ENCODE measurements at regions of chr3 and their contacts with region 1.

Region 1: DNA sequence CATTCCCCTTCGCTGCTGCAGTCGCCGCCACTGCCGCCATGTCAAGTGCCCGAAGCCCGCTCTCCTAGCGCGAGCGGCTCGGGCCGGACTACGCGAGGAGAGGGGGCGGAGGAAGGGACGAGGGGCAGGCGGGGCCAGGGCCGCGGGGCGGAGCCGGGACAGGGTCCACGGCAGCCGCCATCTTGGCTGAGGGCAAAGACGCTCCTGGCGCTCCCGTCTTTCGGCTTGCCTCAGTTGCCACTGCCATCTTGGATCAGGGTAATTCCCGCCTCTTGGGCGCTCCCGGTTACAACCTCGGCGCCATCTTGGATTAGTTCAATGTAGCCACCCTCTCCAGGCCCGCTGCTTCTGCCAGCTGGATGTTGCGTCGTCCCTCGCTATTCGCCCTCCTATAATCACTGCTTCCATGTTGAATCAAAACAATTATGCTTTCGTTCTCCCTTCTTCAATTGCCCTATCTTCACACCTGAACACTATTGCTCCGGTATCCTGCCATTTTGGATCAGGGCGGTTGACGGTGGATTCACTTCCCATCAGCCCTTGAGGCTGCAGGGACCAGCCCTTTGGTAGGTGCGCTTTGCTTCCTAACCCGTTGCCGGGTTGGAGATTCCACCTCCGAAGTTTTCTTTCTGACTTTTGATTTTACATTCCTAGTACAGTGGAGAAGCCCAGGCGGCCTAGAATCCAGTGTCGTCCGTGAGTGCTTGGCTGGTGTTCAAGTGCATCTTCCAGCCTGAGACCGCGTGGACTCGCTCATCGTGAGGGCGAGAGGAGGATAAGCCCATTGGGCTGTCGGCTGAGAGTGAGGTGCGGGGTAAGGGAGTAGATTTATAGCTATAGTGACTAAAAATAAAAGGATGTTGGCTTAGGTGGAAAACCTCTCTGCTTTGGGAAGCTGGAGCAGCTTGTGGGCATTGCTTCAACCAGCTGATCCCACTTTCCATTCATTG is at the start of gene HACD2:
- DNase-seq: peak; percentile 85 to 98 (median 92)
- ATAC-seq: peak; percentile 93
- H3K4me3 ChIP-seq: peak within 1 kb of the TSS; percentile 79
- H3K4me3 Mint-ChIP-seq: peak within 1 kb of the TSS; percentile 95
- H3K27ac ChIP-seq: peak within 1 kb of the TSS; percentile 84 to 92
- H3K27ac Mint-ChIP-seq: peak within 1 kb of the TSS; percentile 89
- H3K4me1 ChIP-seq: peaks cover 16% of the 10 kb centered on the region
- H3K4me1 Mint-ChIP-seq: peaks cover 25% of the 10 kb centered on the region
- H3K27me3 ChIP-seq: no peaks in the 10 kb centered on the region
- H3K27me3 Mint-ChIP-seq: no peaks in the 10 kb centered on the region
- CTCF ChIP-seq: no peak
- total RNA-seq, gene HACD2: 12.1 to 13.3 TPM

Region 2: DNA sequence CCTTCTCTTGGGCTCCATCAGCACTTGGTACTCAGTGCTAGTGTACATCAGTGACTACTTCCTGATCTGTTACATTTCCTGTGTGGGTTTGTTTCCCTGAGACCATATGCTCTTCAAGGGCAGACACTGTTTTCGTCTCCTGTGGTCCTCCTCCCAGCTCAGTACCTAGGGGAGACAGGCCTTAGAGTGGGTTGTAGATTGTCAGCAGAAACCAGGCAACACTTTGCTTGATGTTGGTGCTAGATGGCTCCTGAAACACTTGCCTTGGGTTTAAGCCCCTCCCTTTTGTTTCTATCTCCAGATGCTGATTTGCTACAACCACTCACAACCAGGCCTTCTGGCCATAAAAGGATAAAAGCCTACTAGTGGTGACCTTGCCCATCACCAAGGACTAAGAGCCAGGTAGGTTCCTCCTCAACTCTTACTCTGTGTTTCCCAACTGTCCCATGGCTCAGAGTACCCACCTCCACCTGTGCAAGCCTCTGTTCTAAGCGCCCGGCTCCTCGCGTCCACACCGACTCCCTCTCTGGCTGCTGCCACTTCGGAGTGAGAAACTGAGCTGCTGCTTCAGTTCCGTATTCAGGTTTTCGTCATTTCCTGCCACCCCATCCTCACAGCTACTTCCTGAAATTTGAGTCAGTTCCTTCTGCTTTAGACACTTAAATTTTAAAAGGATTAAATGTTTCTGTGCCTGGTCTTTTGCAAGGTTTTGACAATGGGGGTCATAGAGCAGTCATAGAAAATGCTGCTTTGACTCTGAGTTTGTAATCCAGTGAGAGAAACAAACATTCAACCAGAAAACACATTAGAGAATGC is 1924.7 kb before region 1 on chr3 and contains the start of gene HCLS1:
- CTCF ChIA-PET with region 1: no interaction called
- POLR2A ChIA-PET with region 1: no interaction called
- intact Hi-C with region 1: loop called (anchors 2 to 10 kb)
- DNase-seq: peak; percentile 46 to 89 (median 62)
- ATAC-seq: peak; percentile 83
- H3K4me3 ChIP-seq: peak within 1 kb of the TSS; percentile 61
- H3K4me3 Mint-ChIP-seq: peak within 1 kb of the TSS; percentile 94
- H3K27ac ChIP-seq: peak within 1 kb of the TSS; percentile 83 to 97
- H3K27ac Mint-ChIP-seq: peak within 1 kb of the TSS; percentile 96
- H3K4me1 ChIP-seq: peaks cover 48% of the 10 kb centered on the region
- H3K4me1 Mint-ChIP-seq: peaks cover 55% of the 10 kb centered on the region
- H3K27me3 ChIP-seq: no peaks in the 10 kb centered on the region
- H3K27me3 Mint-ChIP-seq: no peaks in the 10 kb centered on the region
- CTCF ChIP-seq: no peak
- total RNA-seq, gene HCLS1: 204 to 206 TPM

Region 3: GRCh38 chr3:122514123-122515019 is 1070.9 kb before region 1 on chr3 and contains the start of gene KPNA1:
- CTCF ChIA-PET with region 1: no interaction called
- POLR2A ChIA-PET with region 1: no interaction called
- intact Hi-C with region 1: loop called in 1 of 2 experiments (anchors 10 kb)
- DNase-seq: peak; percentile 70 to 95 (median 82)
- ATAC-seq: peak; percentile 85
- H3K4me3 ChIP-seq: peak within 1 kb of the TSS; percentile 68
- H3K4me3 Mint-ChIP-seq: peak within 1 kb of the TSS; percentile 89
- H3K27ac ChIP-seq: peak within 1 kb of the TSS; percentile 83 to 97
- H3K27ac Mint-ChIP-seq: peak within 1 kb of the TSS; percentile 82
- H3K4me1 ChIP-seq: peaks cover 17% of the 10 kb centered on the region
- H3K4me1 Mint-ChIP-seq: peaks cover 44% of the 10 kb centered on the region
- H3K27me3 ChIP-seq: no peaks in the 10 kb centered on the region
- H3K27me3 Mint-ChIP-seq: no peaks in the 10 kb centered on the region
- CTCF ChIP-seq: no peak
- total RNA-seq, gene KPNA1: 46.2 to 49.8 TPM

Region 4: DNA sequence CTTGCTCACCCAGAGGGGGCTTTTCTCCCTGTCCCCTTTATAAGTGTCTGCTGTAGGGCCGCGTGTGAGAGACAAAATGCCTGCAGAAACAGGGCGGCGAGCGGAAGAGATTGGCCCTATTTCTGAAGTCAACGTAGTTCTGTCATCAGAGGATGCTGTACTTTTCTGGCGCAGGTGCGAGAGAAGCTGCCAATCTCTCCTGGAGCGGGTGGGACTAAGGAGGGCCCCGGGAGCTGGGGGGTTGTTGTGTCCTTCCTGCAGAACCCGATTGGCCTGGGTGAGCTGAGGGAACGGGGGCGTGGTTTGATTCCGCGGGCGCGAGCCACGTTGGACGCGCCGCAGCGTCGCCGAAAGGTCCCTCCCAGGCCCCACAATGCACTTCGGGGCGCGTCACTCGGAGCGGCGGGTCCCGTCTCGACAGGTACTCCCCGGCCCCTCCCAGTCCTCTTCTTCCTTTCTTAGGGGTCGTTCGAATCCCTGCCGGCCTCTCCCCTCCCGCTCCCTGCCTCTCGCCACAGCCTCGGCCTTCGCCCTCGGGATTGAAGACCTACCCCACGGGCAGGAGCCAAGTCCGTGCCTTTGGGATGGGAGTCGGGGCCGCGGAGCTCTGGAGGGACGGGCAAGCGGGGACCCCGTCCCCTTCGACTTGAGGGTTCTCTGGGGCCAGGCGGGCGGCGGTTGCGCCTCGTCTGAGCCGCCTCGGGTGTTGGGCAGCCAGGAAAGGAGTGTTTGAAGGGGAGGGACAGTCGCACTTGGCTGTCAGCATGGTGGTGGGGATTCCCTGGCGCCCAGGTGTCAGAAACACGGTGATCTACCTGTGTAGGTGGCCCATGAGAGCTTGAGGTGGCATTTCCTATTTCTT is 383.5 kb before region 1 on chr3 and contains the start of gene SEC22A:
- CTCF ChIA-PET with region 1: no interaction called
- POLR2A ChIA-PET with region 1: interaction called, 12 read pairs
- intact Hi-C with region 1: loop called (anchors 1 to 2 kb)
- DNase-seq: peak; percentile 88 to 99 (median 94)
- ATAC-seq: peak; percentile 95
- H3K4me3 ChIP-seq: peak within 1 kb of the TSS; percentile 88
- H3K4me3 Mint-ChIP-seq: peak within 1 kb of the TSS; percentile 89
- H3K27ac ChIP-seq: peak within 1 kb of the TSS; percentile 96 to 98
- H3K27ac Mint-ChIP-seq: peak within 1 kb of the TSS; percentile 98
- H3K4me1 ChIP-seq: peaks cover 20% of the 10 kb centered on the region
- H3K4me1 Mint-ChIP-seq: peaks cover 44% of the 10 kb centered on the region
- H3K27me3 ChIP-seq: no peaks in the 10 kb centered on the region
- H3K27me3 Mint-ChIP-seq: no peaks in the 10 kb centered on the region
- CTCF ChIP-seq: no peak
- total RNA-seq, gene SEC22A: 7.9 to 11.5 TPM

Region 5: DNA sequence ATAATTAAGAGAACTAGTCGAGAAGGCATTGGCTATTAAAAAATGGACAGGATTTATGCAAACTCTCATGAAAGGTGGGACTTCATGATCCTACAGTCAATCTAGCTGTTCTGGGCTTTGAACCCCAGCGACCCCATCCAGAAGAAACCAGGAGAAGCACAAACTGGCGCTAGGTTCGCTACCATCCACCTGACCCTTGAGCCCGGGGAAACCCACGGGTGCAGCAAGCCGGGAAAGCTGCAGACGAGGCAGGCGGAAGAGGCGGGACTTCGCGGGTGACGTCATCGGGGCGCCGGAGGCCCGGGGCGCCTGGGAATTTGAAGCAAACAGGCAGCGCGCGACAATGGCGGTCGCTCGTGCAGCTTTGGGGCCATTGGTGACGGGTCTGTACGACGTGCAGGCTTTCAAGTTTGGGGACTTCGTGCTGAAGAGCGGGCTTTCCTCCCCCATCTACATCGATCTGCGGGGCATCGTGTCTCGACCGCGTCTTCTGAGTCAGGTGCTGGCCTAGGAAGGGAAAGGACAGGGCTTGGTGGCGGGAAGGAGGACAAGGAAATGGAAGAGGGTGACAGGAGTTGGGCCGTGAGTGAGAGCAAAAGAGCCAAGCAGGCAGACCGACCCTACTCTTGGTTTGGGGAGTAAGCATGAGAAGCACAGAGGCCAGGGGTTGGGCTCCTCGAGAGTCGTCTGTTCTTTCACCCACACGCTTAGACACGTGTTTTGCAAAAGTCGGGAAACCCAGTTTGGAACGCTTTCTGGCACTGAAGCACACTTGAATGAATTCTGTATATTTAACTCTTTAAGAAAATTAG is 1145.1 kb after region 1 on chr3 and contains the start of gene UMPS:
- CTCF ChIA-PET with region 1: no interaction called
- POLR2A ChIA-PET with region 1: no interaction called
- intact Hi-C with region 1: loop called in 1 of 2 experiments (anchors 10 kb)
- DNase-seq: peak; percentile 83 to 95 (median 91)
- ATAC-seq: peak; percentile 97
- H3K4me3 ChIP-seq: peak within 1 kb of the TSS; percentile 78
- H3K4me3 Mint-ChIP-seq: peak within 1 kb of the TSS; percentile 98
- H3K27ac ChIP-seq: peak within 1 kb of the TSS; percentile 54 to 76
- H3K27ac Mint-ChIP-seq: peak within 1 kb of the TSS; percentile 94
- H3K4me1 ChIP-seq: peaks cover 21% of the 10 kb centered on the region
- H3K4me1 Mint-ChIP-seq: peaks cover 44% of the 10 kb centered on the region
- H3K27me3 ChIP-seq: peaks cover 5 to 11% of the 10 kb centered on the region in 2 experiments
- H3K27me3 Mint-ChIP-seq: peaks cover 17% of the 10 kb centered on the region
- CTCF ChIP-seq: no peak
- total RNA-seq, gene UMPS: 19.5 to 19.7 TPM